ENCODE measurements at regions of chr5 and their contacts with region 1.

Region 1: GRCh38 chr5:139787568-139788293 is 7.9 kb upstream of the PSD2 start:
- DNase-seq: peak; percentile 88 to 99 (median 96)

Region 2: GRCh38 chr5:139696894-139697658 is 90.7 kb before region 1 on chr5:
- intact Hi-C with region 1: no loop called
- DNase-seq: peak in 7 of 10 donors; percentile 64 to 95 (median 76)

Region 3: DNA sequence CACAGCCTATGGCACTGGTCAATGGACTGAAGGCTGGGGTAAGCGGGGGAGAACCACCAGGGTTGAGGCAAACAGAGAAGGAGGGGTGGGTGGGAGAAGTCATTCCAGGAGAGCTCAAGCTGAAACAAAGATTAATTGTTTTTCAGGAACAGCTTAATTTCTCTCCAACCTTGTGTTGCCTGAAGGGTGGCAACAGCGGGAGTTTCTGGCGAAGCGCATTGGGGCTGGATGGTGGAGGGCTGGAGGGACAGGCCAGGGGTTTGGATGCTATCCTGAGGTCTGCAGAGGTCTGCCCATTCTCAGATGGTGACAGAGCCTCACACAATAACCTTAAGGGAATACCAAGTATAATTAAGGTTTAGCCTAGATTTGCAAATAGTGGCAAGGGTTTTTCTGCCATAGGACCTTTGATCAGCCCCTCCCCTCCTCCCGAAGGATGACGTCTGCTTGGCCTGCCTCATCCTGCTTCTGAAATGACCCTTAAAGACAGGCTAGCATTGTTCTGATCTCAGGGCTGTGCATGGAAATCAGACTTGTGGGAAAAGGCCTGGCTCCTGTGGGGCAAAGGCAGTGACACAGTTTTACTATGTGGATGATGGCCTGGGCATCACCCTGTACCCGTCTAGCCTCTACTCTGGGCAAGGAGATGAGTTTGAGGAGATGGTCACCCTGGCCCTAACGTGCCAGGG is 40.6 kb after region 1 on chr5:
- intact Hi-C with region 1: loop called (anchors 1 kb)
- DNase-seq: peak in 8 of 10 donors; percentile 33 to 93 (median 63)

Region 4: GRCh38 chr5:139844472-139845145 is 56.9 kb after region 1 on chr5:
- intact Hi-C with region 1: loop called (anchors 1 kb)
- DNase-seq: peak; percentile 65 to 96 (median 86)

Region 5: GRCh38 chr5:139863855-139864558 is 76.3 kb after region 1 on chr5:
- intact Hi-C with region 1: loop called (anchors 1 kb)
- DNase-seq: peak; percentile 51 to 95 (median 76)

Region 6: GRCh38 chr5:139968547-139969261 is 181.0 kb after region 1 on chr5:
- intact Hi-C with region 1: loop called (anchors 1 kb)
- DNase-seq: peak; percentile 76 to 98 (median 90)

Region 7: GRCh38 chr5:140042643-140043500 is 255.1 kb after region 1 on chr5 and contains the start of gene NRG2:
- intact Hi-C with region 1: loop called (anchors 10 kb)
- DNase-seq: peak; percentile 69 to 97 (median 76)

Region 8: DNA sequence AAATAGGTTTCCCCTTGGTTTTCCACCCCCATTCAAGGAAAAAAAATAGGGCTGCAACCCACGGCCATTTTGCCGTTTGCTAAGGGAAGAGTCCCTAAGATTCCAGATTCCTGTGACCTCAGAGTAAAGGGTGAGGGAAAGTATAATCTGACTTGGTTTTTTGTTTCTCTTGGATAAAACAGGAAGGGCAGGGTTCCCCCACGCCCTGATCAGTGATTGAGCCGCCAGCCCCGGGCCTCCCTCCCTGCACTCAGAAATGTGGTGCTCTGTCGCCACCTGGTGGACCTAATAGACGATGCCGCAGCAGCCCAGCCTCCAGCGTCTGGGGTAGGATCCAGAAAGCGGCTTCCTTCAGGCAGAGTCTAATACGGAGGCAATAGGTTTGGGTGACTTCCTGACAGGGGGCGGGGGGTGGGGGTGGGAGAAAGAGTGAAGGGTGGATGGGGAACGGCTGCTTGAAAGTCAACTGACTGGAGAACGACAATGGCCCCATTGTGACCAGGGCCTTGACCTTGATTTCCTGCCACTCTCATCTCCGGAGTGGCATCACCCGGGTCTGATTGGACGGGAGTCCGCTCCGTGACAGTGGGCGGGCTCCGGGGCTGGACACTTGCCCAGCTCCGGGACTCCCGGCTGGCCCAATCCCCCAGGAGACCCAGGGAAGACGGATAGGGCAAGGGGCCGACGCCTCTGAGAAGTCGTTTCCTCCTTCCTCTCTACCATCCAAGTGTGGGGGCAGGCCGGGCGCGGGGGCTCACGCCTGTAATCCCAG is 369.5 kb after region 1 on chr5:
- intact Hi-C with region 1: loop called (anchors 1 kb)
- DNase-seq: peak; percentile 86 to 98 (median 90)

Measured in posterior cingulate gyrus (tissue), 11 donors.